Vagina (tissue), 2 donors: ENCODE measurements at regions of chr7 and their contacts with region 1.

Region 1: GRCh38 chr7:100148559-100149350 is at the start of gene LAMTOR4:
- DNase-seq: peak; percentile 98 to 99
- H3K4me3 ChIP-seq: peak within 1 kb of the TSS; percentile 75 to 84
- H3K27ac ChIP-seq: peak within 1 kb of the TSS; percentile 90
- H3K4me1 ChIP-seq: peaks cover 20% of the 10 kb centered on the region
- H3K27me3 ChIP-seq: no peaks in the 10 kb centered on the region
- CTCF ChIP-seq: no peak
- POLR2A ChIP-seq: peak in 1 of 2 donors; percentile 56
- total RNA-seq, gene LAMTOR4: 161 TPM

Region 2: DNA sequence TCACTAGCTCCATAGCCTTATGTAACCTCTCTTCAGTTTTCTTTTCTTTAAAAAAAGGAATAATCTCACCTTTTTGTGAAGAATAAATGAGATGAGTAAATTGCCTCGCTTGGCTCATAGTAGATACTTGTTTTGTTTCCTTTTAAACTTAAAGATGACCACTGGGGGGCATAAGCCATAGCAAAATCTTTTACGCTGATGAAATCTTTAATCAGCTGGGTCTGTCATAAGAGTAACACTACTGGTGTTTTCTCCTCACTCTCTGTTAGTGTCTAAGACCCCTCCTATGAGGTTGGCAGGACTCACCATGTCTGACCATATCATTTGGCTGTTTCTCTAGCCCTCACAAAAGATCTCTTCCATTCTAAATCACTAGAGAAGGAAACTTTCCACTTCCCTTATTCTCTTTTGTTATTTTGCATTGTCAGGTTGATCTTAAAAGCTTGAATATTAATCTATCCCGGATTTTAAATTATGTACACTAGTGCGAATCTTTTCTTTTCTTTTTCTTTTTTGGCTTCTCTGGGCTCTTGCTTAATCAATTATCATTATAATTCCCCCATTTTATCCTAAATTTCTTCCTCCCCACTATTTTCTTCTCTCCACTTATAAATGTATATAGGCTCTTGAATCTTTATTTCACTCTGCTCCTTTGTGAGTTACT is 41.4 kb after region 1 on chr7:
- intact Hi-C with region 1: loop called (anchors 10 kb)
- DNase-seq: no peak
- H3K4me3 ChIP-seq: no peak overlapping the region
- H3K27ac ChIP-seq: no peak overlapping the region
- H3K4me1 ChIP-seq: no peaks in the 10 kb centered on the region
- H3K27me3 ChIP-seq: no peaks in the 10 kb centered on the region
- CTCF ChIP-seq: no peak
- POLR2A ChIP-seq: no peak